Sciatic nerve (tissue), 2 donors: ENCODE measurements at regions of chr16 and their contacts with region 1.

Region 1: DNA sequence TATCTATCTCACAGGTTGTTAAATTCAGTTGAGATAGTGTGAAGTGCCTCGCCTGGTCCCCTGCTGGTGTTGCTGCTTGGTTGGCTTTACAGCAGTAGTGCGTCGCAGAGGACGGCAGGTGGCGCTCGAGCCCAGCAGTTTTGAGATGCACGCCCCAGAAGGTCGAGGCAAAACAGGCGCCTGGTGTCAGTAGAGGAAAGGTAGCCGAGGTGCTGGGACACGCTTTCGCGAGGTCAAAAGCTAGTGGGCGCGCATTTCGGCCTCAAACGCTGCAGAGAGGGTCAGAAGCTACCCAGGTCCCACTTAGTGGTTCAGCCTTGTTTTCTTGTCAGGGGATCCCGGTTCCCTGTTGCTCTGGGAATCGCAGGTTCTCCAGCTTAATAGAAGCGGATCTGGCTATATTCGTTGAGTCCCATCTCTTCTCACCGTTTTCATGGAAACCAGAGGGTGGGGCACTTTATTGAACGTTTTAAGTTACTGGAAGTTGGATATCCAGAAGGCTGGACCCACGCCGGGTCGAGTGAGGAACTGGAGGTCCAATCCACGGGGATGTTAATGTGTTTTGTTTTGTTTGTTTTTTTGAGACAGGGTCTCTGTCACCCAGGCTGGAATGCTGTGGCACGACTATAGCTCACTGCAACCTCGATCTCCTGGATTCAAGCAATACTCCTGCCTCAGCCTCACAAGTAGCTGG is 10.3 kb upstream of the ZFP90 start:
- DNase-seq: peak; percentile 92
- ATAC-seq: peak; percentile 94

Region 2: GRCh38 chr16:69123910-69124309 is 595.1 kb after region 1 on chr16:
- intact Hi-C with region 1: loop called (anchors 10 kb)
- DNase-seq: no peak
- ATAC-seq: no peak